Activated B cell treated with CpG ODN at 0.5 μM for 24 hours (primary cell): ENCODE measurements at regions of chr7 and their contacts with region 1.

Region 1: GRCh38 chr7:100691676-100692577 is 2.1 kb downstream of the GIGYF1 start:
- DNase-seq: peak; percentile 67
- ATAC-seq: peak; percentile 63
- H3K4me3 Mint-ChIP-seq: peak overlapping the region; percentile 90
- H3K27ac Mint-ChIP-seq: peak overlapping the region; percentile 80
- H3K4me1 Mint-ChIP-seq: peaks cover 49% of the 10 kb centered on the region
- H3K27me3 Mint-ChIP-seq: no peaks in the 10 kb centered on the region
- CTCF ChIP-seq: peak; percentile 21

Region 2: GRCh38 chr7:100102950-100103840 is 588.7 kb before region 1 on chr7:
- CTCF ChIA-PET with region 1: no interaction called
- POLR2A ChIA-PET with region 1: no interaction called
- intact Hi-C with region 1: no loop called
- DNase-seq: no peak
- ATAC-seq: no peak
- H3K4me3 Mint-ChIP-seq: peak overlapping the region; percentile 92
- H3K27ac Mint-ChIP-seq: no peak overlapping the region
- H3K4me1 Mint-ChIP-seq: peaks cover 29% of the 10 kb centered on the region
- H3K27me3 Mint-ChIP-seq: no peaks in the 10 kb centered on the region
- CTCF ChIP-seq: no peak

Region 3: DNA sequence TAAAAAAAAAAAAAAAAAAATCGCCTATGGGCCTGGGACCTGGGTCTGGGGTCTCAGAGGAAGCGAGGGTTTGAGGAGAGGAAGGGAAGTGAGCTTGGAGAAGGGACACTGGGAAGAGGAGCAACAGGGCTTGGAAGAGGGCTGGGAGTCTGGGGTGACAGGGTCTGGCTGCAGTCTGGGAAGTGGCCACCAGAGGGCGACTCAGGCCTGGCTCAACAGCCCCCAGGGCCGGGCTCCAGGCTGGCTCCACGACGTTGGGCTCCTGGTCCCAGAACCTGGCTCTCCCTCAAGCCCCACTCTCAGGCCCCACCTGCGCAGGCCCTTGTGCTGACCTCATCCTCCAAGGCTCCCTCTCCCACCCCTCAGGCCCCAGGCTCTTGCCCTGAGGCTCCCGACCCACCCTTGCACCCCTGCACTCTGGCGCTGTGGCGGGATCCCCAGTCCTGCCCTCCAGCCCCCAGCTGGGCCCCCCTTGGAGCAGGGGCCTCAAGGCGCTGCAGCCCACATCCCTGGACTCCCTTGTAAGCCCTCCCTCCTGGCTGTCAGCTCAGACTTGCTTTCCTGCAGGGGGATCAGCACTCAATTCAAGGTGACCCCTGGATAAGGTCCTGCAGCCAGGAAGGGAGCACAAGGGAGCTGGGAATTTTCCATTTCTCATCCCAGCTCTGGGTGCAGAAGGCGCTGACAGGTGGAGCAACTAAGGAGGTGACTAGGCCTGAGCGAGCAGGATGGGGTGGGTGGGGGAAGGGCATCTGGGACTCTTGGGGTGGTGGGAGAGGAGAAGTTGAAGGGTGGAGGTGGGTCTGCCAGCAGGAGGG is 222.5 kb before region 1 on chr7:
- CTCF ChIA-PET with region 1: interaction called, 11 read pairs
- POLR2A ChIA-PET with region 1: no interaction called
- intact Hi-C with region 1: loop called (anchors 2 kb)
- DNase-seq: peak; percentile 81
- ATAC-seq: peak; percentile 91
- H3K4me3 Mint-ChIP-seq: no peak overlapping the region
- H3K27ac Mint-ChIP-seq: peak overlapping the region; percentile 46
- H3K4me1 Mint-ChIP-seq: peaks cover 24% of the 10 kb centered on the region
- H3K27me3 Mint-ChIP-seq: no peaks in the 10 kb centered on the region
- CTCF ChIP-seq: no peak

Region 4: GRCh38 chr7:100563809-100564400 is 128.0 kb before region 1 on chr7:
- CTCF ChIA-PET with region 1: interaction called, 24 read pairs
- POLR2A ChIA-PET with region 1: interaction called, 3 read pairs
- intact Hi-C with region 1: loop called (anchors 1 kb)
- DNase-seq: peak; percentile 79
- ATAC-seq: peak; percentile 78
- H3K4me3 Mint-ChIP-seq: no peak overlapping the region
- H3K27ac Mint-ChIP-seq: no peak overlapping the region
- H3K4me1 Mint-ChIP-seq: peaks cover 25% of the 10 kb centered on the region
- H3K27me3 Mint-ChIP-seq: no peaks in the 10 kb centered on the region
- CTCF ChIP-seq: peak; percentile 90

Region 5: GRCh38 chr7:100611974-100612729 is 79.8 kb before region 1 on chr7 and contains the start of gene MOSPD3:
- CTCF ChIA-PET with region 1: interaction called, 5 read pairs
- POLR2A ChIA-PET with region 1: interaction called, 12 read pairs
- intact Hi-C with region 1: no loop called
- DNase-seq: peak; percentile 99
- ATAC-seq: peak; percentile 91
- H3K4me3 Mint-ChIP-seq: peak within 1 kb of the TSS; percentile 99
- H3K27ac Mint-ChIP-seq: peak within 1 kb of the TSS; percentile 100
- H3K4me1 Mint-ChIP-seq: peaks cover 19% of the 10 kb centered on the region
- H3K27me3 Mint-ChIP-seq: no peaks in the 10 kb centered on the region
- CTCF ChIP-seq: no peak
- total RNA-seq, gene MOSPD3: 10.5 and 11.9 TPM in 2 replicates

Region 6: GRCh38 chr7:100673300-100673941 is 18.5 kb before region 1 on chr7 and contains the start of gene GNB2:
- CTCF ChIA-PET with region 1: interaction called, 7 read pairs
- POLR2A ChIA-PET with region 1: interaction called, 6 read pairs
- intact Hi-C with region 1: loop called (anchors 1 kb)
- DNase-seq: peak; percentile 99
- ATAC-seq: peak; percentile 67
- H3K4me3 Mint-ChIP-seq: peak within 1 kb of the TSS; percentile 97
- H3K27ac Mint-ChIP-seq: peak within 1 kb of the TSS; percentile 95
- H3K4me1 Mint-ChIP-seq: peaks cover 11% of the 10 kb centered on the region
- H3K27me3 Mint-ChIP-seq: no peaks in the 10 kb centered on the region
- CTCF ChIP-seq: no peak
- total RNA-seq, gene GNB2: 129 and 132 TPM in 2 replicates

Region 7: DNA sequence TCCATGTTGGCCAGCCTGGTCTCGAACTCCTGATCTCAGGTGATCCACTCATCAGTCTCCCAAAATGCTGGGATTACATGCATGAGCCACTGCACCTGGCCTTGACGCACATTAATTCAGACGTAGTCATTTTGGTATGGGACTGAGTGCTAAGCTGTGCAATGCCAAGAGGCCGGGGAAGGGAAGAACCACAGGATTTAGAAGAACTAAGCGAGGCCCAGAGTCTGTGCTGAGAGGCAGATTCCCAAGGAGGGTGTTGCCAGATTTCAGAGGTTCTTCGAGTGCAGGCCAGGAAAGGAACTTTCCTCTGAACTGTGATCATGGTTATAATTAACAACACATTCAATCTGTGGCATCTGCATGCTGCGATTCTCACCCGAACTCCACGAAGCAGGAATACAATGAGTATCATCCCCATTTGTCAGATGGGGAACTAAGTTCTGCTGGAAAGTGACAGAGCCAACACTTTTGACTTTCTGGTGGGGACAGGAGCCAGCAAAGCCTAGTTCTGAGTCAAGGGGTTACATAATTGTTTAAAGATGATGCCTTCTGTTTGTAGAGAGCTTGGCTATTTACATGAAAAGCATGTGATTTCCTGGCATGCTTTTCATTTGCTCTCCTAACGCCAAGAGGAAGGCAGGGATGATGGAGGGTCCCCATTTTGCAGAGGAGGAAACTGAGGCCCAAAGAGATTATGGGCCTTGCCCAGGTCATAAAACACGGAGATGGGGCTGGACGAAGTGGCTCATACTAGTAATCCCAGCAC is 35.3 kb after region 1 on chr7:
- CTCF ChIA-PET with region 1: no interaction called
- POLR2A ChIA-PET with region 1: interaction called, 4 read pairs
- intact Hi-C with region 1: loop called (anchors 1 kb)
- DNase-seq: no peak
- ATAC-seq: no peak
- H3K4me3 Mint-ChIP-seq: no peak overlapping the region
- H3K27ac Mint-ChIP-seq: no peak overlapping the region
- H3K4me1 Mint-ChIP-seq: peaks cover 5% of the 10 kb centered on the region
- H3K27me3 Mint-ChIP-seq: peaks cover 19% of the 10 kb centered on the region
- CTCF ChIP-seq: no peak